Activated CD8-positive, alpha-beta T cell treated with anti-CD3 and anti-CD28 coated beads, Interleukin-2, amount 10 ng/mL, durations not matched to agents 7 days and 5 days (primary cell): ENCODE measurements at regions of chr20 and their contacts with region 1.

Region 1: GRCh38 chr20:35741892-35742740 is at the start of gene RBM39:
- DNase-seq: peak; percentile 100
- ATAC-seq: peak; percentile 89
- H3K4me3 Mint-ChIP-seq: peak within 1 kb of the TSS; percentile 96
- H3K27ac Mint-ChIP-seq: peak within 1 kb of the TSS; percentile 100
- H3K4me1 Mint-ChIP-seq: peaks cover 39% of the 10 kb centered on the region
- H3K27me3 Mint-ChIP-seq: no peaks in the 10 kb centered on the region
- total RNA-seq, gene RBM39: 333 to 358 TPM

Region 2: GRCh38 chr20:35232575-35232974 is 509.5 kb before region 1 on chr20:
- CTCF ChIA-PET with region 1: no interaction called
- POLR2A ChIA-PET with region 1: no interaction called
- DNase-seq: no peak
- ATAC-seq: no peak
- H3K4me3 Mint-ChIP-seq: no peak overlapping the region
- H3K27ac Mint-ChIP-seq: no peak overlapping the region
- H3K4me1 Mint-ChIP-seq: peaks cover 5% of the 10 kb centered on the region
- H3K27me3 Mint-ChIP-seq: peaks cover 18% of the 10 kb centered on the region

Region 3: DNA sequence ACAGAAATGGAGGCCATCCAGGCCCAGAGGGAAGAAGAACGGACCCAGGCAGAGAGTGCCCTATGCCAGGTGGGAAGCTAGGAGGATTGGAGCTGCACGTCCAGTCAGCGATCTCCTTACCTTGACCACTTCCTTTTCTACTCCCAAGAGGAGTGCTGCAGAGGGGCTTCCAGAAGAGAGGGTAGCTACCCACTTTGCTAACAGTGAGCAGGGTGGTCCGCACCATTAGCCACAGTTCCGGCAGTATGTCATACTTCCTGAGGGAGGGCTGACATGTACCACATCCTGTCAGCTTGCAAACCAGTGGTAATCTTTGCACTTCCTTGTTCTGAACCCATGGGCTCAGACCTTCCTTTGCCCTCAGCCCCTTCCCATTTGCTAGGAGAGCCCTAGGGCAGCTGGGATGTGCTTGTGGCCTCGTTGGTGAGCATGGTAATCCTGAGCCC is 251.4 kb before region 1 on chr20:
- CTCF ChIA-PET with region 1: interaction called, 3 read pairs
- POLR2A ChIA-PET with region 1: interaction called, 23 read pairs
- DNase-seq: peak; percentile 87
- ATAC-seq: peak; percentile 96
- H3K4me3 Mint-ChIP-seq: peak overlapping the region; percentile 99
- H3K27ac Mint-ChIP-seq: peak overlapping the region; percentile 99
- H3K4me1 Mint-ChIP-seq: peaks cover 53% of the 10 kb centered on the region
- H3K27me3 Mint-ChIP-seq: no peaks in the 10 kb centered on the region

Region 4: DNA sequence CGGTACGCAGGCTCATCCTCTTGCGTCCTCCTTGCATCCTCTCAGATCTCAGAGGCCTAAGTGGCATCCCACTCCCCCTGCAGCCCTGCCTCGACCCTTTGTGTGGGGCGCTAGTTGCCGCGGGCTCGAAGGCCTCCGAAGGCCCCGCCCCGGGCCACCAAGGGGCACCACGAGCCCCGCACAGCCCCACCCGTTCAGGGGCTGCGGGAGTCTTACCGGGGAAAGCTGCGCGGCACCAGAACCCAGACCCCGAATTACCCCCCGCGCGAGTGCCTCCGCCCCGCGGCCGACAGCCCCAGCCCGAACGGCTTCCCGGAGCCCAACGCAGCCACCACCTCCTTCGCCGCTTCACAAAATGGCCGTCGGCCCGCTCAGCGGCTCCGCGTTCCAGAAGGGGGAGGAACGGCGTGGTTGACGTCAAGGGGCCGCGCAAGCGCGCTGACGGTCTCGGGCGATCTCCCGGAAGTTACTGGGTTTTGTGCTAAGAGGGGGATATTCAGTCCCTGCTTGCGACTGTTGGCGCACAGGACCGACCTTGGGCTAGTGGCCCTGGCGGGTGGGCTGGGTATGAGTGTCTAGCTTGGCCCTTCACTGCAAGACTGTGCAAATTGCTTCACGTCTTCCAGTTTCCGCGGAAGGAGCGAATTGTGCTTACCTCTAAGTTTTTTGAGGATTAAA is 77.4 kb before region 1 on chr20 and contains the starts of genes CPNE1 and RBM12:
- CTCF ChIA-PET with region 1: interaction called, 3 read pairs
- POLR2A ChIA-PET with region 1: interaction called, 52 read pairs
- DNase-seq: peak; percentile 96
- ATAC-seq: peak; percentile 80
- H3K4me3 Mint-ChIP-seq: peak within 1 kb of the TSS; percentile 96
- H3K27ac Mint-ChIP-seq: peak within 1 kb of the TSS; percentile 99
- H3K4me1 Mint-ChIP-seq: peaks cover 38% of the 10 kb centered on the region
- H3K27me3 Mint-ChIP-seq: no peaks in the 10 kb centered on the region
- total RNA-seq, gene CPNE1: 271 to 272 TPM
- total RNA-seq, gene RBM12: 112 to 119 TPM

Region 5: GRCh38 chr20:35726759-35727711 is 15.1 kb before region 1 on chr20:
- CTCF ChIA-PET with region 1: interaction called, 6 read pairs
- POLR2A ChIA-PET with region 1: interaction called, 13 read pairs
- DNase-seq: no peak
- ATAC-seq: no peak
- H3K4me3 Mint-ChIP-seq: no peak overlapping the region
- H3K27ac Mint-ChIP-seq: no peak overlapping the region
- H3K4me1 Mint-ChIP-seq: peaks cover 29% of the 10 kb centered on the region
- H3K27me3 Mint-ChIP-seq: no peaks in the 10 kb centered on the region

Region 6: GRCh38 chr20:35771689-35772562 is 29.8 kb after region 1 on chr20 and contains the start of gene PHF20:
- CTCF ChIA-PET with region 1: interaction called, 48 read pairs
- POLR2A ChIA-PET with region 1: interaction called, 401 read pairs
- DNase-seq: peak; percentile 100
- ATAC-seq: peak; percentile 93
- H3K4me3 Mint-ChIP-seq: peak within 1 kb of the TSS; percentile 82
- H3K27ac Mint-ChIP-seq: peak within 1 kb of the TSS; percentile 94
- H3K4me1 Mint-ChIP-seq: peaks cover 68% of the 10 kb centered on the region
- H3K27me3 Mint-ChIP-seq: no peaks in the 10 kb centered on the region
- total RNA-seq, gene PHF20: 53.6 to 61.5 TPM

Region 7: DNA sequence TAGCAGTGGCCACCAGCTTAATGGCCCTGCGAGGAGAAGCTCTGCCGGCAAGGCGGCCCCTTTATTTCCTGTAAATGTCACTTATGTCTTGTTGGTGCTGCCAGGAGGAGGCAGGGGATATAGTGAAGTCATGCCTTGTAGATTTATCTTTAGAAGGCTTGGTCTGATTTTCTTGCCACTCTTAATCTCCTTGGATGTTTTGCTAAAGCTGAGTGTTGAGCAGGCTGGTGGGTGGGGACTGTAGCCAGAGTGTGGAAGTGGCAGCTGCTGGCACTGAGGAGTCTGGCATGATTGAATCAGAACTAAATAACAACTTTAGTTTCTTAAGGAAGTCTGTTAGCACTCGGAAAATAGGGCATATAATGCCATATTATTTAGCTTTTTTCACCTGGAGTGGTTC is 107.6 kb after region 1 on chr20:
- CTCF ChIA-PET with region 1: interaction called, 3 read pairs
- POLR2A ChIA-PET with region 1: interaction called, 10 read pairs
- DNase-seq: no peak
- ATAC-seq: no peak
- H3K4me3 Mint-ChIP-seq: no peak overlapping the region
- H3K27ac Mint-ChIP-seq: no peak overlapping the region
- H3K4me1 Mint-ChIP-seq: peaks cover 7% of the 10 kb centered on the region
- H3K27me3 Mint-ChIP-seq: no peaks in the 10 kb centered on the region